ENCODE measurements at regions of chr11 and their contacts with region 1.

Region 1: DNA sequence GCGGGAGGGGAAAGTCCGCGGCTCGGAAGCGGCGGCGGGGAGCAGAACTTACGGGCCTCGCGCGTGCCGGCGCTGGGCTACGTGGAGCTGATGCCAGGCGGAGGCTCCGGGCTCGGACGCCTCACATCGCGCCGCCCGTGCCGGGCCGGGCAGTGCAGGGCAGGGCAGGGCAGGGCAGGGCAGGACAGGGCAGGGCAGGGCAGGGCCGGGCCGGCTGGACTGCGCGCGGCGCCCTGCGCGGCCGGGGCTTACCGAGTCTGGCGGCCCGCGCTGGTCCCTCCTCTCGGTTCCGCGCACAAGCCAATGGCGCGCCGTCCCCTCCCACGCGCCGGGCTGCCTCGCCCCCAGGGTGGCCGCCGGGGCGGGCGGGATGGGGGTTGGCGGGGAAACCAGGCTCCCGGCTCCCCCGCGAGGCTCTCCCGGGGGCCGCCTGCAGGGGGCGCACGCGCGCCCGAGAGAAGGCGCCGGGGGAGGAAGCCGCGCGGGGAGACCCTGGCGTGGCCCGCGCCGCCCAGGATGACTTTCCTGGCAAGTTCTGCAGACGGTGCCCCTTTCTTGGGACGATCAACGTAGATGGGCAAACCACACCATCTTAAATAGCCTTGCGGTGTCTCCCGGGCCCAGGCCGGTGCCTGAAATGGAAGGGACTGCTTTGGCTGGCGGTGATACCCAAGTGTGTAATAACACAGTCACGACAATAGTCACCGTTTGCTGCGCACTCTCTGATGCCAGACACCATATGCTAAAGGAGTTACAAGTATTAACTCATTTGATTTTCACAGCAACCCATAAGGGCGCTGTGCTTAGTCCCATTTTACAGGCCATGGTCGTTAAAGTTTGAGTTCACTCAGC is at the start of gene TP53I11:
- DNase-seq: peak; percentile 92
- ATAC-seq: peak; percentile 86
- total RNA-seq, gene TP53I11: 47.4 TPM

Region 2: DNA sequence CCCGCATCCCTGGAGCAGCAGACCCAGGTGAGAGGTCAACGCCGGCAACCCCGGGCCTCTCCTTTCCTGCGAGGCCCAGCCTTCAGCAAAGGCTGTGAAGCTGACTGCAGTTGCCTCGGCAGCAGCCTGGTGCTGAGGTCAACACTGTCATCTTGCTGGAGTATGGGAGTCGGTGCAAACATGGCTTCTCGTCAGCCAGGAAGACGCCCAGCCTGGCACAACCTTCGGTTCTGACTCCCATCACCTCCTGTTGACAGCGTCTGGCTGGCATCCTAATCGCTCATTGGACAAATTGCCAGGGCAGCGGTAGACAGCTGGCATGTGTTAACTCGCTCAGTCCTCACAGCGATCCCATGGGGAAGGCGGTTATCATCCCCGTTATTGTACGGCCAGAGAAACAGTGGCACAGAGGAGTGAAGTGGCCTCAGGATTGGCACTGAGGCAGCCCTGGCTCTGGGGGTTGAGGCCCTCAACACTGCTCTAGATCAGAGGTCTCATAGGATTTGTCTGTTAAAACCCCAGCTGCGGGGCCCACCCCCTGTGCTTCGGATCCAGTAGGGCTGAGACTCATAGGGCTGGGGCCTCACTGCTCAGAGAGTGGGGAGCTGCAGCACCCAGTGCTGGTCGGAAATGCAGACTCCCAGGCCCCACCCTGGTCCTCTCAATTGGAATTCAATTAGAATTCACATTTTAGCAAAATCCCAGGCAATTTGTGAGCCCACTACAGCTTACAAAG is 39.1 kb after region 1 on chr11:
- intact Hi-C with region 1: no loop called
- DNase-seq: peak; percentile 92
- ATAC-seq: peak; percentile 93

Region 3: DNA sequence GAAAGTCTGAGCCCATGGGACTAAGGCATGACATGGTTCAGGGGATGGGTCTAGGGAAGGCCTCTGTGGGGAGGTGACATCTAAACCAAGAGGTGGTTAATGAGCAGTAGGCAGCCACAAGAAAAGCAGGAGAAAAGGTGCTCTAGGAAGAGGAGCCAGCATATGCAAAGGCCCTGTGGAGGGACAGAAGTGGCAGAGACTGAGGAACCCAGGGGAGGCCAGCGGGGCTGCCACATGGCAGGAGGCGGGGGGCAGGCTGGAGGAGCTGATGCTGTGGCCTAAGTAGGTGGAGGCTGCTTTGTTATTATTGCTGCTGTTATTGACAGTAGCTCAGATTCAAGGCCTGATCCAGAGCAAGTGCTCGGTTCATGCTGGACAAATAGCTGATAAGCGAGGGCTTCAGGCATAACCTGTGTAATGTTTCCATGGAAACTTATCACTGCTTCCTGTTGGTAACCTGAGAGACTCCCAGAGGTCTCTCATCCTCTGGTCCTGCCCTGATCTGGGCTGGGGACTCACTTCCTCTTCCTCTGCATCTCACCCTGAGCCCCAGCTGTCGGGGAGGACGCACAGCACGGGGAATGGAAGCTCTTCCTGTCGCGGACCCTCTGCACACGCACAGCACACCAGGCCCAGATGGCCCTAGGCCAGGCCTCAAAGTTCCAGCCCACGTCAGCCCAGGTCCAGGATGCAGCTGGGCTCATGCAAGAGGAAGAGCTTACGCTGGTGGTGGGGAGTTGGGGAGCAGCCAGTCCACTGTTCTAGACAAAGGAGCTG is 75.1 kb after region 1 on chr11:
- intact Hi-C with region 1: loop called (anchors 10 kb)
- DNase-seq: peak; percentile 83
- ATAC-seq: peak; percentile 43